A549 (cell line): ENCODE measurements at regions of chr5 and their contacts with region 1.

Region 1: DNA sequence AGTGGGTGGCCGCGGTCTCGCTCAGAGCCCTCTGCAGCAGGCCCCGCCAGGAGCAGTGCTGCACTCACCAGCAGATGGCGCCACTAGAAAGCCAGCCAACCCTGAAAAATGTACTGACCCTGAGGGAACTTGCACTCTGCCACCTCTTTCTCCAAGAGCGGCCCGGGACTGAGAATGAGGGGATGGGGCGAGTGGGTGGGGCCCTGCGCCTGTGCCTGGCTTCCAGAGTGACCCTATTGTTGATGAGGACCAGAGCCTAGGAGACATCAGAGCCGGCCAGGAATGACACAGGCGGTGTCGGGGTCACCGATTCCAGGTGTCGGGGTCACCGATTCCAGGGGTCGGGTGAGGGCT is 2.9 kb upstream of the IL17B start:
- DNase-seq: peak; percentile 68 to 86
- ATAC-seq: peak; percentile 89 to 98
- H3K4me3 ChIP-seq: no peak overlapping the region
- H3K27ac ChIP-seq: peak overlapping the region; percentile 43 to 72; a peak in 2 of 6 replicates
- H3K4me1 ChIP-seq: no peaks in the 10 kb centered on the region; the same call in 2 of the 3 replicates
- CTCF ChIP-seq: peak; percentile 91
- EP300 ChIP-seq: no peak
- POLR2A ChIP-seq: no peak
- RAD21 ChIP-seq: peak; percentile 89 to 92

Region 2: GRCh38 chr5:148042881-148043280 is 1339.1 kb before region 1 on chr5:
- CTCF ChIA-PET with region 1: no interaction called
- POLR2A ChIA-PET with region 1: no interaction called
- DNase-seq: no peak
- ATAC-seq: no peak
- H3K4me3 ChIP-seq: no peak overlapping the region
- H3K27ac ChIP-seq: no peak overlapping the region
- H3K4me1 ChIP-seq: no peaks in the 10 kb centered on the region
- CTCF ChIP-seq: no peak
- EP300 ChIP-seq: no peak
- POLR2A ChIP-seq: no peak
- RAD21 ChIP-seq: no peak

Region 3: DNA sequence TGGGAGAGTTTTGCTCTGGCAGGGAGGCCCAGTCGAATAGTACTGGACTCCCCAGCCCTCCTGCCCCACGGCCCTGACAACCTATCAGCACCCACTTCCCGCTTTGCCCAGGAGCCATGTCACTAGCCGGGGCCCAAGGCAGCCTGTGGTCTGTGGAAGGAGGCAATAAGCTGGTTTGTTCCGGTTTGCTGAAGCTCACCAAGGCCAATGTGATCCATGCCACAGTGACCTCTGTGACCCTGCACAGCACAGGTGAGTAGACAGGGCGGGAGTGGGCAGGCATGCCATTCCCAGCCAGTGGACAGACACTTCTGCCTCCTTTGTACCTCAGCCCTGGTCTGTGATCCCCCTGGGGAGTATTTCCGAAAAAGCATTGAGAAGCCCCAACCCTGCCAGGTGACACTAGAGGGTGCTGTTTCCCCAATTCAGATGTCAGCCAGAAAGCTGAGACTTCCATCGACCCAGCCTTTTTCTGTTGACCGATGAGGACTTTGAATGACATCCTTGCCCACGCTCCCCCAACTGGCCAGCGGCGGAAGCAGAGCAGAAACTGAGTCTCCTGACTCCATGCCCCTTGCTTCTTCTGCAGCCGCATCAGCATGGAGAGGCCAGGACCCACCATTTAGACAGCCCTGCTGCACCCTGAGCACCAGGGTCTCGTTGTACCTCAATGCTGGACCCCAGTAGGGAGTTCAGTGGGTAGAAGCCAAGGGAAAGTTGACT is 14.6 kb before region 1 on chr5:
- CTCF ChIA-PET with region 1: interaction called, 232 read pairs
- POLR2A ChIA-PET with region 1: no interaction called
- DNase-seq: peak; percentile 82 to 96
- ATAC-seq: peak; percentile 71 to 91
- H3K4me3 ChIP-seq: no peak overlapping the region
- H3K27ac ChIP-seq: no peak overlapping the region
- H3K4me1 ChIP-seq: peaks cover 4% of the 10 kb centered on the region; the same call in 1 of the 3 replicates
- CTCF ChIP-seq: peak; percentile 84
- EP300 ChIP-seq: no peak
- POLR2A ChIP-seq: no peak
- RAD21 ChIP-seq: peak; percentile 69 to 79

Region 4: DNA sequence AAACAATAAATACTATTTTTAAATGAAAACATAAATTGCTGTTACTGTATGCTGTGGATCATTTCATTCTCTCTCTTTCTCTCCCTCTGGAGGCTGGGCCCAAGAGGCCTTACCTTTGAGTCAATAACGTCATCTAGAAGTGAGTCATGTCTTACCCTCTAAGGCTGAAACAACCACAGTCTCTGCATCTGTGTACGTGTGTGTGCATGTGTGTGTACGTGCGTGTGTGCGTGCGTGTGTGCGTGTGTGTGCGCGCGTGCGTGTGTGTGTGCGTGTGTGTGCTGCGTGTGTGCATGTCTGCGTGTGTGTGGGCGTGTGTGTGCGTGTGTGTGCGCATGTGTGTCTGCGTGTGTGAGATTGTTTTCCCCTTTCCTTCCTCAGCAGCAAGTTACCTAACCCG is 10.8 kb after region 1 on chr5:
- CTCF ChIA-PET with region 1: interaction called, 1,709 read pairs
- POLR2A ChIA-PET with region 1: no interaction called
- DNase-seq: peak in 1 of 2 experiments; percentile 28
- ATAC-seq: peak; percentile 58 to 73; a peak in 4 of 6 replicates
- H3K4me3 ChIP-seq: no peak overlapping the region
- H3K27ac ChIP-seq: no peak overlapping the region
- H3K4me1 ChIP-seq: no peaks in the 10 kb centered on the region; the same call in 2 of the 3 replicates
- CTCF ChIP-seq: no peak
- EP300 ChIP-seq: no peak
- POLR2A ChIP-seq: no peak
- RAD21 ChIP-seq: no peak

Region 5: DNA sequence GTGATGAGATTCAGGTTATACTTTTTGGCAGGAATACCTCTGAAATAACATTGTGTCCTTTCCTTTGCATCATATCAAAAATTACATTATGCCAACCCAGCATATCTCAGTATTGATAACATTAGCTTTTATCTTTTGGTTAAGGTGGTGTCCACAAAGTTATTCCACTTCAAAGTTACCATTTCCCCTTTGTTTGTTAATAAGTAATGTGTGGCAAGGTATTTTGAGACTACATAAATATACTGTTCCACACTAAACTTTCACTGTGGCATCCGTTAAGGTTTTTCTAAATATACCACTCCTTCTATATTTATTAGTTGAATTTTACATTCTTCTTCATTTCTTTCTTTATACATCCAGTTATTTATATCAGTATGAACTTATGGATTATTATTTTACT is 185.3 kb after region 1 on chr5:
- CTCF ChIA-PET with region 1: interaction called, 58 read pairs
- POLR2A ChIA-PET with region 1: no interaction called
- DNase-seq: no peak
- ATAC-seq: no peak
- H3K4me3 ChIP-seq: no peak overlapping the region
- H3K27ac ChIP-seq: no peak overlapping the region
- H3K4me1 ChIP-seq: peaks cover 19% of the 10 kb centered on the region
- CTCF ChIP-seq: no peak
- EP300 ChIP-seq: no peak
- POLR2A ChIP-seq: no peak
- RAD21 ChIP-seq: no peak

Region 6: GRCh38 chr5:149581192-149581861 is 199.4 kb after region 1 on chr5 and contains the start of gene ARHGEF37:
- CTCF ChIA-PET with region 1: interaction called, 10 read pairs
- POLR2A ChIA-PET with region 1: no interaction called
- DNase-seq: peak in 1 of 2 experiments; percentile 42
- ATAC-seq: peak; percentile 90
- H3K4me3 ChIP-seq: peak within 1 kb of the TSS; percentile 58
- H3K27ac ChIP-seq: peak within 1 kb of the TSS; percentile 79 to 83
- H3K4me1 ChIP-seq: peaks cover 15% of the 10 kb centered on the region; the same call in 2 of the 3 replicates
- CTCF ChIP-seq: no peak
- EP300 ChIP-seq: no peak
- POLR2A ChIP-seq: peak; percentile 14; the same call in 1 of the 2 replicates
- RAD21 ChIP-seq: no peak
- polyA plus RNA-seq, gene ARHGEF37: 1.5 and 1.7 TPM in 2 replicates

Region 7: GRCh38 chr5:149586791-149587283 is 204.9 kb after region 1 on chr5:
- CTCF ChIA-PET with region 1: interaction called, 12 read pairs
- POLR2A ChIA-PET with region 1: no interaction called
- DNase-seq: no peak
- ATAC-seq: no peak; a peak in 1 of 6 replicates
- H3K4me3 ChIP-seq: no peak overlapping the region
- H3K27ac ChIP-seq: no peak overlapping the region
- H3K4me1 ChIP-seq: peaks cover 14% of the 10 kb centered on the region; the same call in 2 of the 3 replicates
- CTCF ChIP-seq: no peak
- EP300 ChIP-seq: no peak
- POLR2A ChIP-seq: no peak
- RAD21 ChIP-seq: no peak